Activated CD4-positive, alpha-beta T cell treated with anti-CD3 and anti-CD28 coated beads for 36 hours (primary cell): ENCODE measurements at regions of chr4 and their contacts with region 1.

Region 1: DNA sequence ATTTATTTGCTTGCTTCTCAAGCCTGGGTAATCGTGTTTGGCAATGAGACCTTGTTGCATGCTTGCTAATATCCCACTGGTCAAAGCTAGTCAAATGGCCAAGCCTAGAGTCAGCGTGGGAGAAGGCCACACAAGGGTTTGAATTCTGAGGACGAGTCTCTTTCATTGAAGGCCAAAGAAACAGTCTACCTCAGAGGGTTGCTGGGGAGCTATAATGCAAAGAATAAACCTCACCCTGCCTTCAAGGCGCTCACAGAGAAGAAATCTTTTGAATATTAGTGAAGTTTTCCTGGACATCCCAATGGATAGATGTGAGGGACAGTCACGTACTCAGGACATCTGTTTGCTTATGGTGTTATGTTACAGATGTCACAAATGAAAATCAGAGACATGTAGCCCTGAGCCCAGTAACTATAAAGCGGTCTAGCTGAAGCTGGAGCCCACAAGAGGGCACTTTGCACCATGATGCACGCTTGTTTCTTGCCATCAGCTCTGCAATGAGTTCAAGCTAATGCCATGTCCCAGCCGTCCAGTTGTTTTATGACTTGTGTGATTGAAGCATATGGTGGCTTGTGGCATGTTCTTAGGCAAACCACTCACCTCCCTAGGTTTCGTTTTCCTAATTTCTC is 1.1 kb upstream of the TLR3 start:
- DNase-seq: peak; percentile 63
- ATAC-seq: peak; percentile 87
- H3K4me3 Mint-ChIP-seq: no peak overlapping the region
- H3K27ac Mint-ChIP-seq: no peak overlapping the region
- H3K4me1 Mint-ChIP-seq: peaks cover 10% of the 10 kb centered on the region
- H3K27me3 Mint-ChIP-seq: peaks cover 12% of the 10 kb centered on the region

Region 2: DNA sequence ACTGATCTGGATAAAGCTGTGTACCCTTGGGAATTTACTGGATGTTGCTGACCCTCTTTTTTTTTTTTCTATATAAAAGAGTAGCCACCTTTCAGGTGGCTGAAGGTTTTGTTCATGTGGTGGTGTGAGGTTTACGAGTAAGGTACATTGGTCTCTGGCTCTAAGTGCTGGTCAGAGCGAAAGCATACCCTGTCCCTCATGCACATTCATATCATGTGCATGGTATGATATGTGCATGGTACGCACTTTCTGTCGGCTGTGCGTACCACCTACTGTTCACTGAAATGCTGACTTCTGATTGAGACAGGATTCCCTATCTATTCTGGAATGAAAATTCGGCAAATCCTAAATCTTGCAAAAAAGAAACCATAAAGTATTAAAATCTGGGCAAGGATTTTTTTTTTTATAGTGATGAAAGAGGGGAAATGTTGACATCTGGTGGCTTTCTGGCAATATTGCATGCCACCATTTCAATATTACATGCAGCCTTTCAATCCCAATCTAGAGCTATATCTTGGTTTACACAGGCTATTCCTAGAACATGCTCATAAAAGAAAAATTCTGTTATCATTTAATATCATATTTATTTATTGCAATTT is 69.4 kb after region 1 on chr4:
- CTCF ChIA-PET with region 1: interaction called, 12 read pairs
- POLR2A ChIA-PET with region 1: no interaction called
- intact Hi-C with region 1: loop called (anchors 1 to 2 kb)
- DNase-seq: no peak
- ATAC-seq: no peak
- H3K4me3 Mint-ChIP-seq: no peak overlapping the region
- H3K27ac Mint-ChIP-seq: no peak overlapping the region
- H3K4me1 Mint-ChIP-seq: peaks cover 8% of the 10 kb centered on the region
- H3K27me3 Mint-ChIP-seq: no peaks in the 10 kb centered on the region

Region 3: GRCh38 chr4:186201535-186202230 is 133.8 kb after region 1 on chr4:
- CTCF ChIA-PET with region 1: interaction called, 8 read pairs
- POLR2A ChIA-PET with region 1: no interaction called
- intact Hi-C with region 1: loop called (anchors 1 to 5 kb)
- DNase-seq: peak; percentile 78
- ATAC-seq: peak; percentile 94
- H3K4me3 Mint-ChIP-seq: peak overlapping the region; percentile 5
- H3K27ac Mint-ChIP-seq: peak overlapping the region; percentile 30
- H3K4me1 Mint-ChIP-seq: peaks cover 11% of the 10 kb centered on the region
- H3K27me3 Mint-ChIP-seq: no peaks in the 10 kb centered on the region

Region 4: DNA sequence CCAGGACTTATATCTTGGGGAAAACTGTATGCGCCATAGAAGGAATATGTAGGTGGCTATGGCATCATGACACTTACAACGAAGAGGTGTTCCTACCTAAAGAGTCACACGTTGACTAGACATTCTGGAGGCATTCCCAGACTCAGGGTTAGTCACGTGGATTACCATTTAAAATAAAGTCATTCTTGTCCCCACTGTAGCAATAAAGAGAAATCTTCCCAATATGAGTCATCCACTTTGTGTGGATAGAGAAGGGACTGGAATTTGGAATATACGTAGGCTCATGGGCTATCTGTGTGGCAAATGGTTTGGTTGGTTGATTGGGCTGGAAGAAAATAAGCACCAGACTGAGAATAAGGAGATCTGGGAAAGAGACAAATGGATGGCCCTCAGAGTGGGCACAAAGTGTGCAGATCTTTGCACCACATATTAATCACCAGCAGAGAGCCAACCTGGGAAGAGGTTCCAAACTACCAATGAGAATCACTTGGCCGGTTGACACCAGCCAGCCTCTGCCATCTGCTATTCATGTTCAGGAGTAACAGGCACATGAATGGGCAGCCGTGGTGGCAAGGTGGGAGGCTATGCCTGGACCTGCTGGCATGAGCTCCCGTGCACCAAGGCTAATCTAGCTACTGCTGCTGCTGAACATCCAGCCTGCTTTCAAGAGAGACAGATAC is 446.5 kb after region 1 on chr4:
- CTCF ChIA-PET with region 1: no interaction called
- POLR2A ChIA-PET with region 1: interaction called, 11 read pairs
- intact Hi-C with region 1: no loop called
- DNase-seq: no peak
- ATAC-seq: no peak
- H3K4me3 Mint-ChIP-seq: no peak overlapping the region
- H3K27ac Mint-ChIP-seq: no peak overlapping the region
- H3K4me1 Mint-ChIP-seq: no peaks in the 10 kb centered on the region
- H3K27me3 Mint-ChIP-seq: no peaks in the 10 kb centered on the region